ENCODE measurements at regions of chr17 and their contacts with region 1.

Region 1: DNA sequence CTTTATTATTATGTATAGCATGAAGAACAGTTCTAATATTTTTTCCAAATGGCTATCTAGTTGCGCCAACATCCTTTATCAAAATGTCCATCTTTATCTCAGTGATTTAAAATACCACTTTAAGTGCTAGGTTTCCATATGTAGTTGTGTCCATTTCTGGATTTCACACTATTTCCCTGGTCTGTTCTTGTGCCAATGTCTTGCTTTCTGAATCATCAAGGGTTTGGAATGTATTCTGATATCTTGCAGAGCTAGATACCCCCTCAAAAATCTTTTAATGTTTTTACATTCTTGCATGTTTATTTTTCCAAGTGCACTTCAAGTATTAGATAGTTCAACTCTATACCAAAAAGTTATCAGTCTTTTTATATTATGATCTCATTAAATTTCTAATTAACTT is 14.3 kb downstream of the MBTD1 start:
- DNase-seq: no peak
- H3K4me3 ChIP-seq: no peak overlapping the region
- H3K27ac ChIP-seq: no peak overlapping the region
- H3K4me1 ChIP-seq: no peaks in the 10 kb centered on the region
- H3K27me3 ChIP-seq: no peaks in the 10 kb centered on the region
- CTCF ChIP-seq: no peak
- EP300 ChIP-seq: no peak
- POLR2A ChIP-seq: no peak

Region 2: DNA sequence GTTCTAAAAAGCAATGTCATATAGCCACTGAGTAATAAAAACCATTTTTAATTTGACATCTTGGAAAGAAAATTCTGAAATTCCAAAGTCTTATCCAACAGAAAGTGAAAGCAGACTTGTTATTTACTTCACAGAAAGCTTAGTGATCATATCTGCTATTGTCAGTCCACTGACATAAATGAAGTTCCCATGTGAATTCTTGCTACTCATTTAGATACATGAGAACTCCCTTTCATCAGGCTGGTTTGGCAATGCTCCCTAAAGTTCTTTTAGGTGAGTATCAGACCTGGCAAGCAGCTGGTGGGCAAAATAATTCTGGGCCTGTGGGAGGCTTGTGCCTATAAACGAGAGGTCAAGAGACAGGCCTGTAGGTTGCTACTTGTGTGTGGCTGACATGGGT is 55.9 kb before region 1 on chr17:
- intact Hi-C with region 1: loop called in 1 of 4 experiments (anchors 10 kb)
- DNase-seq: no peak
- H3K4me3 ChIP-seq: no peak overlapping the region
- H3K27ac ChIP-seq: no peak overlapping the region
- H3K4me1 ChIP-seq: peaks cover 5% of the 10 kb centered on the region
- H3K27me3 ChIP-seq: no peaks in the 10 kb centered on the region
- CTCF ChIP-seq: no peak
- EP300 ChIP-seq: no peak
- POLR2A ChIP-seq: no peak

Region 3: DNA sequence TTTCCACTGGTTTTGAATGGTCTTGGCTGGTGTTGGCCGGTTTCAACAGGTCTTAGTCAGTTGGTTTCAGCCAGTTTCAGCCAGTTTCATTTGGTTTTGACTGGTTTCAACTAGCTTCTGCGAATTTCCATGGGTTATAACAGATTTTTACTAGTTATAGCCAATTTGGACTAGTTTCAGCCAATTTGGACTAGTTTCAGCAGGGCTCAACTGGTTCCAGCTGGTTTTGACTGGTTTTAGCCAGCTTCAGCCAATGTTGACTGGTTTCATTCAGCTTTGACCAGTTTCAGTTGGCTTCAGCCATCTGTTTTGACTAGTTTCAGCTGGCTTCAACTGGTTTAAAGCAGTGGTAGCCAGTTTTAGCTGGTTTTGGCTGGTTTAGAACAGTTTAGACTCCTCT is 447.4 kb after region 1 on chr17:
- intact Hi-C with region 1: no loop called
- DNase-seq: no peak
- H3K4me3 ChIP-seq: no peak overlapping the region
- H3K27ac ChIP-seq: no peak overlapping the region
- H3K4me1 ChIP-seq: no peaks in the 10 kb centered on the region
- H3K27me3 ChIP-seq: no peaks in the 10 kb centered on the region
- CTCF ChIP-seq: no peak
- EP300 ChIP-seq: no peak
- POLR2A ChIP-seq: no peak